Left cardiac atrium (tissue), 4 donors: ENCODE measurements at regions of chr10 and their contacts with region 1.

Region 1: DNA sequence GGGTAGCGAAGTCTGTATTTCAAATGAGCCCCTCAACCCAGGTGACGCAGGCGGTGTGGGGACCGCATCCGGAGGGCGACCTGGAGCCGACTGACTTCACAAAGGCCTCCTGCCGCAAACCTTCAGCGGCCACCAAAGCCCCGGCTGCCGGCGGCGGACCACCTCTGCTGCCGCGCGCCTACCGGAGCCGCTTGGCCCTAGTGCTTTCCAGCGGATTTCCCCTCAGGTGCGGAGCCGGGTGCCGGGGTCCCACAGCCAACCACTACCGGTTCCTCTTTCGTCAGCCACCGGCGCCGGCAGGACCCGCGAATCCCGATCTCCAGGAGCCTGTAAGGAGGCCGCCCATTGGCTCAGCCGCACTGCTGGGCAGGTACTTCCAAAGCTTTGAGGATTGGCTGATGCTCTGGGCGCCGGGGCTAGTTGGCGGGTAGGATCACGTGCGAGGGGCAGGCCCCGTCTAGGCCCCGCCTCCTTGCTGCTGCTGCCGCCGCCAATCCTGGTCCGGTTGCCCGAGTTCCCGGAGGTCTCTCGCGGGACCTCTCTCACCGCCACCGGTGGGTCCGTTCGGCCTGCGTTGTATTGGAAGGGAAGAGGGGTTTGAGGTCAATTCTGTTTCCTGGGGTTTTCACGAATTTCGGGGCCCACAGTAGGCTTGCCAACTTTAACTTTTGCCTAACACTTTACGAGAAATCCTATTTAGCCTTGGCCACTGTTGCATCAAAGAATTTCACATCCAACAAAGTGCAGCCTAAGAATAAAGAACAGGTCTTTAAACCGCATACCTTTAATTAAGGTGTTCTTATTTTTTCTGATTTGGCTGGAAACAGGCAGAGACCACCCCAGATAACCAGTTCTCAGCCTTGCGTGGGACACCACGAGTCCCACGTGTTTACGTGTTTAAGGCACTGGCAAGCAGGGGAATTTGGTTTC is at the start of gene GSTO2:
- DNase-seq: peak; percentile 100
- ATAC-seq: peak; percentile 100
- total RNA-seq, gene GSTO2: 0.82 to 0.92 TPM

Region 2: GRCh38 chr10:103584216-103585010 is 684.6 kb before region 1 on chr10:
- intact Hi-C with region 1: no loop called
- DNase-seq: peak; percentile 51
- ATAC-seq: peak; percentile 21 to 63

Region 3: DNA sequence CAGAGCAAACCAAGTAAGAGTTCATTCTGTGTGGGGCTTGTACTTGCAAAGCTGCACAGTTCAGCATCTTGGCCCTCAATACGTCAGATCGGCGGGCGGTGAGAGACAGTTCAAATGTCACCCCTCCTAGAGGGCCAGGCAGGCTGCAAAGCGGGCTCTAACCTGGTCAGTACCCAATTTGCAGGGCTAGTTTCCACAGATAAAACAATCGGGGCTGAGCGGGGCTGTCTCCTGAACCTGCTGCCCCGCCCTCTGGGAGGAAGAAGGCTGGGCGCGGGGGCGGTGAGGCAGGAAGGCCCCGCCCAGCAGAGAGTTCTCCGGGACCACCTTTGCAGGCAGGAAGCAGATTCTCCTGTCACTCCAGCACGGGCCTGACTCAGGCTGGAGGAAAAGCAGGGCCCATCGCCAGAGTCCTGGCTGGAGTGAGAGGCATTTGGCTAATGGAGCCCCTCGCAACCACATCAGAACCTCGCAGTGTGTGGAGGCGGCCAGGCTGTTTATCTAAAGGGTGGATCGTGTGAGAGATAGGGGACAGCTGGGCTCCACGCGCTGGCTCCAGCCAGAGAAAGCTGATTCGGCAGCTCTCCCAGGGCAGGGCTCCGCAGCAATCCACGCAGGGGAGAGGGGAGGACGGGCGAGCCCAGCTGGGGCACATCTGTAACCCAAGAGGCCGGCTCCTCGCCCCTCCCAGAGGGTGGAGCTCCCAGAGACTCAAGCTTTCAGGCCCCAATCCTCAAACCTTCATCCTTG is 496.7 kb before region 1 on chr10:
- intact Hi-C with region 1: loop called in 1 of 2 experiments (anchors 5 kb)
- DNase-seq: peak; percentile 86
- ATAC-seq: peak; percentile 83 to 96

Region 4: GRCh38 chr10:103918053-103918846 is 350.7 kb before region 1 on chr10 and contains the start of gene STN1:
- intact Hi-C with region 1: no loop called
- DNase-seq: peak; percentile 98
- ATAC-seq: peak; percentile 98
- total RNA-seq, gene STN1: 26.7 to 28.5 TPM

Region 5: DNA sequence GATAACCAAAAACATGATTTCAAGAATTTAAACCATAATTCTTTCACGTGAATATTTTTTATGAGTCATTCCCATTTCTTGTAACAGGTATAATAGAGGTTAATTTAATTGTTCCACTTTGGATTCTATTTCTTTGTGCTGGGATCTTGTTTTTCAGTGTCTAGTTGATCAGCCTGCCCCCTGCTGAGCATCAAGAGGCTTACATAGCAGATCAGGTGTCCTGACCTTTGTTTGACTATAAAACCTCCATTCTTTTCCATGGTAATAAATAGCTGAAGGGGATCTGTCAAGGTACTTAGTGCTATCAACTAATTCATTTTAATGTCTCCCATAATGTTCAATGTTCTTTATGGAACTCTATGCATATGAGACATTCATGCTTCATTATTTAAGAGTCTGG is 188.2 kb before region 1 on chr10:
- intact Hi-C with region 1: no loop called
- DNase-seq: no peak
- ATAC-seq: no peak